ENCODE measurements at regions of chr22 and their contacts with region 1.

Region 1: GRCh38 chr22:37077884-37078485 is 26.4 kb downstream of the KCTD17 start:
- DNase-seq: peak in 1 of 2 donors; percentile 70
- ATAC-seq: peak in 3 of 8 donors; percentile 42 to 57 (median 49)
- H3K4me3 ChIP-seq: no peak overlapping the region
- H3K27ac ChIP-seq: peak overlapping the region in 1 of 10 donors; percentile 44
- H3K4me1 ChIP-seq: peaks cover 0 to 24% (median 0%) of the 10 kb centered on the region in 9 donors
- H3K27me3 ChIP-seq: peaks cover 0 to 52% (median 28%) of the 10 kb centered on the region in 7 donors
- CTCF ChIP-seq: peak; percentile 72 to 99 (median 92)

Region 2: GRCh38 chr22:37166675-37167066 is 88.7 kb after region 1 on chr22:
- intact Hi-C with region 1: loop called in 1 of 10 experiments (anchors 5 kb)
- DNase-seq: peak; percentile 85 to 90
- ATAC-seq: peak; percentile 86 to 98 (median 96)
- H3K4me3 ChIP-seq: peak overlapping the region in 5 of 10 donors; percentile 10 to 30 (median 25)
- H3K27ac ChIP-seq: peak overlapping the region in 5 of 10 donors; percentile 43 to 72 (median 55)
- H3K4me1 ChIP-seq: peaks cover 2 to 43% (median 20%) of the 10 kb centered on the region in 9 donors
- H3K27me3 ChIP-seq: peaks cover 0 to 4% (median 0%) of the 10 kb centered on the region in 7 donors
- CTCF ChIP-seq: peak; percentile 89 to 96 (median 94)

Region 3: GRCh38 chr22:37199103-37199759 is 121.2 kb after region 1 on chr22:
- intact Hi-C with region 1: loop called (anchors 1 to 5 kb)
- DNase-seq: peak; percentile 98 to 100
- ATAC-seq: peak; percentile 92 to 96 (median 94)
- H3K4me3 ChIP-seq: peak overlapping the region; percentile 18 to 69 (median 63)
- H3K27ac ChIP-seq: peak overlapping the region; percentile 90 to 97 (median 96)
- H3K4me1 ChIP-seq: peaks cover 24 to 42% (median 39%) of the 10 kb centered on the region in 9 donors
- H3K27me3 ChIP-seq: no peaks in the 10 kb centered on the region
- CTCF ChIP-seq: peak; percentile 85 to 99 (median 97)

Region 4: GRCh38 chr22:37260901-37261336 is 182.9 kb after region 1 on chr22:
- intact Hi-C with region 1: loop called in 1 of 10 experiments (anchors 5 kb)
- DNase-seq: peak; percentile 36 to 50
- ATAC-seq: peak in 7 of 8 donors; percentile 55 to 74 (median 66)
- H3K4me3 ChIP-seq: no peak overlapping the region
- H3K27ac ChIP-seq: no peak overlapping the region
- H3K4me1 ChIP-seq: peaks cover 0 to 21% (median 0%) of the 10 kb centered on the region in 9 donors
- H3K27me3 ChIP-seq: peaks cover 0 to 75% (median 63%) of the 10 kb centered on the region in 7 donors
- CTCF ChIP-seq: peak; percentile 81 to 93 (median 85)

Region 5: GRCh38 chr22:37383341-37383740 is 305.4 kb after region 1 on chr22:
- intact Hi-C with region 1: no loop called
- DNase-seq: no peak
- ATAC-seq: no peak
- H3K4me3 ChIP-seq: no peak overlapping the region
- H3K27ac ChIP-seq: no peak overlapping the region
- H3K4me1 ChIP-seq: no peaks in the 10 kb centered on the region
- H3K27me3 ChIP-seq: peaks cover 0 to 87% (median 53%) of the 10 kb centered on the region in 7 donors
- CTCF ChIP-seq: no peak

Measured in heart right ventricle (tissue), 16 donors.